ENCODE measurements at regions of chr10 and their contacts with region 1.

Region 1: DNA sequence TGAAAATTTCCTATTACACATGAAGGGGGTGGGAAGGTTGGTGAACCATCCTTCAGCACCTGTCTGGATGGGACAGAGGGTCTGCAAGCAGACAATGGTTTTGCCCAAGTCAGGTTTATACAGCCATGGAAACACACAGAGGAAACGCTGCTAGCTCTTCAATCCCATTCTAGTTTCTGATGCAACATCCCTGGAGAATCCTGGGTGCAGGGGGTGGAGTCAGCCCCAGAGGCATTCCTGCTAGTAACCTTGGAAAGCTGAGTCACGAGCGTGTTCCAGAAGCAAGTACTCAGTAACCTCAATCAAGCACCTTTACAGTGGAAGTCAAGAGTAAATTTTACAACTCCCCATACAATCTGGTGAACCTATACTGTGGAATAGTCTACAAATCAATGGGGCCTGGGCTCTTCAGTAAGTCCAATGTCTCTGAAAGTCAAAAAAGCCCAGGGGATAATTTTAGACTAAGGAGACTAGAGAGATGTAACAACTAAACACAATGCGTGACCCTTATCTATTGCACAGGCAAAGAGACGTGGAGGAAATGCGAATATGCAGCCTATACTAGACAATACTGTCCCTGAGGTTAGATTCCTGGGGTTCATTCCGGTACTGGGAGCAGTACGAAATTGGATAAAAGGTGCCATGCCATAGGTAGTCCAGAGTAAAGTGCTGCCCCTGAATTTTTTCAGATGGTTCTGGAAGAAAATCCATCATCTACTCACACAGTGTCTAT is 95.4 kb downstream of the ZRANB1 start:
- DNase-seq: no peak
- H3K4me3 ChIP-seq: no peak overlapping the region
- H3K4me3 Mint-ChIP-seq: no peak overlapping the region
- H3K27ac ChIP-seq: no peak overlapping the region
- H3K27ac Mint-ChIP-seq: no peak overlapping the region
- H3K4me1 ChIP-seq: no peaks in the 10 kb centered on the region
- H3K4me1 Mint-ChIP-seq: peaks cover 0 to 1% (median 0%) of the 10 kb centered on the region in 4 donors
- H3K27me3 ChIP-seq: no peaks in the 10 kb centered on the region
- H3K27me3 Mint-ChIP-seq: peaks cover 2 to 5% of the 10 kb centered on the region in 2 donors

Region 2: DNA sequence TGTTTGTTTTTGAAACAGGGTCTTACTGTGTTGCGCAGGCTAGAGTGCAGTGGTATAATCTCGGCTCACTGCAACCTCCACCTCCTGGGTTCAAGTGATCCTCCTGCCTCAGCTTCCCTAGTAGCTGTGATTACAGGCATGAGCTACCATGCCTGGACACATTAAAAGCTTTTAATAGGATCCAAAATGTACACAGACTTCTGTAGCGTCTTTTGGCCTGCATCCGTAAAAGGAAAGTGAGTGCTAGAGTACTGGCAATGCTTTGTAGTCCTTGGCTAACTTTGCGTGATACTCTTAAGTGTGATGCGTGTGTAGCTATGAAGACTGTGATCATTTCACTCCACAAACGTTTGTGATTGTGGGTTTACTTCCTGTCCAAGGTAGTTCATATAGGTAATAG is 82.1 kb before region 1 on chr10:
- CTCF ChIA-PET with region 1: no interaction called
- POLR2A ChIA-PET with region 1: no interaction called
- intact Hi-C with region 1: no loop called
- DNase-seq: no peak
- H3K4me3 ChIP-seq: no peak overlapping the region
- H3K4me3 Mint-ChIP-seq: no peak overlapping the region
- H3K27ac ChIP-seq: no peak overlapping the region
- H3K27ac Mint-ChIP-seq: no peak overlapping the region
- H3K4me1 ChIP-seq: peaks cover 7% of the 10 kb centered on the region
- H3K4me1 Mint-ChIP-seq: peaks cover 35 to 56% (median 46%) of the 10 kb centered on the region in 4 donors
- H3K27me3 ChIP-seq: no peaks in the 10 kb centered on the region
- H3K27me3 Mint-ChIP-seq: no peaks in the 10 kb centered on the region

Region 3: GRCh38 chr10:125048101-125048864 is 11.0 kb after region 1 on chr10:
- CTCF ChIA-PET with region 1: interaction called, 26 read pairs
- POLR2A ChIA-PET with region 1: no interaction called
- intact Hi-C with region 1: no loop called
- DNase-seq: peak in 4 of 5 donors; percentile 18 to 25 (median 24)
- H3K4me3 ChIP-seq: no peak overlapping the region
- H3K4me3 Mint-ChIP-seq: no peak overlapping the region
- H3K27ac ChIP-seq: no peak overlapping the region
- H3K27ac Mint-ChIP-seq: no peak overlapping the region
- H3K4me1 ChIP-seq: no peaks in the 10 kb centered on the region
- H3K4me1 Mint-ChIP-seq: no peaks in the 10 kb centered on the region
- H3K27me3 ChIP-seq: no peaks in the 10 kb centered on the region
- H3K27me3 Mint-ChIP-seq: peaks cover 8 to 11% of the 10 kb centered on the region in 2 donors

Region 4: GRCh38 chr10:125102821-125103220 is 65.5 kb after region 1 on chr10:
- CTCF ChIA-PET with region 1: no interaction called
- POLR2A ChIA-PET with region 1: no interaction called
- intact Hi-C with region 1: no loop called
- DNase-seq: no peak
- H3K4me3 ChIP-seq: no peak overlapping the region
- H3K4me3 Mint-ChIP-seq: no peak overlapping the region
- H3K27ac ChIP-seq: no peak overlapping the region
- H3K27ac Mint-ChIP-seq: no peak overlapping the region
- H3K4me1 ChIP-seq: no peaks in the 10 kb centered on the region
- H3K4me1 Mint-ChIP-seq: no peaks in the 10 kb centered on the region
- H3K27me3 ChIP-seq: no peaks in the 10 kb centered on the region
- H3K27me3 Mint-ChIP-seq: peaks cover 0 to 7% of the 10 kb centered on the region in 2 donors

Measured in CD4-positive, alpha-beta memory T cell (primary cell).